A549 (cell line): ENCODE measurements at regions of chr17 and their contacts with region 1.

Region 1: GRCh38 chr17:40075201-40075941 is 12.6 kb downstream of the THRA start:
- DNase-seq: peak in 1 of 2 experiments; percentile 75
- ATAC-seq: peak; percentile 6 to 43; a peak in 3 of 6 replicates
- H3K4me3 ChIP-seq: 0 out of 3 replicates have a peak overlapping the region, but pooled peaks have one; percentile 2
- H3K27ac ChIP-seq: peak overlapping the region; percentile 95
- H3K4me1 ChIP-seq: peaks cover 59% of the 10 kb centered on the region
- CTCF ChIP-seq: peak; percentile 97
- EP300 ChIP-seq: no peak
- POLR2A ChIP-seq: no peak
- RAD21 ChIP-seq: peak; percentile 73 to 85

Region 2: DNA sequence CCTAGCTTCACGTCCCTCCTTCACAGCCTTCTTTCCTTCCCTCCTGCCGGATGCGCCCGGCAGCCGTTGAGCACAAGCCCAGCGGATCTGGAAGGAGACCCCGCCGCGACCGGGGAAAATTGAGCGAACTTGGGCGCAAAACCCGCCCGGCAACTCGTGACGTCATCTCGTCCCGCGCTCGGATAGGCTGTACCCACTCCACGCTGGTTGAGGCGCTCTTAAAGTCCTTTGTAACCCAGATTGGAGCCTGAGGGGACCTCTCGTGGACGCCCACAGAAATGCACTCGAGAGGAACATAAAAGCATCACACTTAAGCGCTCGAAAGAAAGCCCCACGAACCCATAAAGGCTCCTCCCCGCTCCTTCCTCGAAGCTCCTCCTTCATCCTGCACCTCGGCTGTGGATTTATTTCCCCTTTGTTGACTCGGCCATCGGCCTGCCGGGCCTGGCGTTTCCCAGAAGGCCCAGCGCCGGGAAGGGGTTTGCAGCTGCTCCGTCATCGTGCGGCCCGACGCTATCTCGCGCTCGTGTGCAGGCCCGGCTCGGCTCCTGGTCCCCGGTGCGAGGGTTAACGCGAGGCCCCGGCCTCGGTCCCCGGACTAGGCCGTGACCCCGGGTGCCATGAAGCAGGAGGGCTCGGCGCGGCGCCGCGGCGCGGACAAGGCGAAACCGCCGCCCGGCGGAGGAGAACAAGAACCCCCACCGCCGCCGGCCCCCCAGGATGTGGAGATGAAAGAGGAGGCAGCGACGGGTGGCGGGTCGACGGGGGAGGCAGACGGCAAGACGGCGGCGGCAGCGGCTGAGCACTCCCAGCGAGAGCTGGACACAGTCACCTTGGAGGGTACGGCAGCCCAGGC is 94.8 kb before region 1 on chr17 and contains the start of gene PSMD3:
- CTCF ChIA-PET with region 1: interaction called, 11 read pairs
- POLR2A ChIA-PET with region 1: no interaction called
- DNase-seq: peak; percentile 97 to 100
- ATAC-seq: peak; percentile 91 to 94
- H3K4me3 ChIP-seq: peak within 1 kb of the TSS; percentile 89
- H3K27ac ChIP-seq: peak within 1 kb of the TSS; percentile 93 to 95
- H3K4me1 ChIP-seq: peaks cover 20% of the 10 kb centered on the region
- CTCF ChIP-seq: peak; percentile 79
- EP300 ChIP-seq: no peak
- POLR2A ChIP-seq: peak; percentile 87
- RAD21 ChIP-seq: peak; percentile 79 to 85
- polyA plus RNA-seq, gene PSMD3: 87.7 and 113 TPM in 2 replicates

Region 3: GRCh38 chr17:40021451-40021971 is 53.9 kb before region 1 on chr17:
- CTCF ChIA-PET with region 1: interaction called, 118 read pairs
- POLR2A ChIA-PET with region 1: no interaction called
- DNase-seq: peak; percentile 56 to 80
- ATAC-seq: peak; percentile 57 to 72
- H3K4me3 ChIP-seq: no peak overlapping the region
- H3K27ac ChIP-seq: peak overlapping the region; percentile 83 to 84
- H3K4me1 ChIP-seq: peaks cover 43% of the 10 kb centered on the region
- CTCF ChIP-seq: no peak
- EP300 ChIP-seq: no peak
- POLR2A ChIP-seq: no peak
- RAD21 ChIP-seq: no peak

Region 4: DNA sequence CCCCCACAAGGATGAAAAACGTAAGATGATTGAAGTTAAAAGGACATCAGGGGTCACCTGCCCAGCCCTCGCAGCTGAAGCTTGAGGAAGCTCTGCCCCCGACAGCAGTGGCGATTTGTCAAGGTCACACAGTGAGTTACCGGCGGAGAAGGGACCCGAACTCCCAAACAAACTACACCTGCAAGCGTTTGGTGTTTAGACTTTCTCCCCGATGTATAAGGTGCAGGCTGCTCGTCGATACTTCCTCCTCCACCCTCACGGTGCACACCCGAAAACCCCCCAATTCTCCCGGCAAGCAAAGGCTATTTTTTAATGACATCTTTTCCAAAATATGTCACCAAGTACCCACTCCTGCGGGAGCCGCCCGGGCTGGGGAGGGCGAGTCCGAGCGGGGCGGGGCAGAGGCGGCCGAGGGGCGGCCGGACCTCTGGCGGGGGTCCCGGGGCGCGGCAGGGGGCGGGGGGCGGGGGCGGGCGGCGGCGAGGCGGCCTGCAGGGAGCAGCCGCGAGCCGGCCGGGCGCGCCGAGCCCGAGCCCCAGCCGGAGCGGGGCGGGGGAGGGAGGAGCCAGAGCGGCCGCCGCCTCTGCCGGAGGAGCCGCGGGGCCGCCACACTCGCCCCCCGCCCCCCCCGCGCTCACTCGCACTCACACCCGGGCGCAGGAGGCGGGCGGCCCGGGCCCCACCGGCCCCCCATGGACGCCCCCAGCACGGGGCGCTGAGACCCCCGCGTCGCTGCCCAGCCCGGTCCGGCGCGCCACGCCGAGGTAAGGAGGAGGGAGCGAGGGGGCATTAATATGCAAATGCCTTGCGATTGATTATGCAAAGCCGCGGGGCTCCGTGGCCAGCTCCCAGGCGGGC is 12.8 kb before region 1 on chr17 and contains the start of gene THRA:
- CTCF ChIA-PET with region 1: interaction called, 919 read pairs
- POLR2A ChIA-PET with region 1: interaction called, 3 read pairs
- DNase-seq: peak in 1 of 2 experiments; percentile 68
- ATAC-seq: peak; percentile 65 to 70
- H3K4me3 ChIP-seq: peak within 1 kb of the TSS; percentile 98
- H3K27ac ChIP-seq: peak within 1 kb of the TSS; percentile 92 to 98
- H3K4me1 ChIP-seq: peaks cover 33% of the 10 kb centered on the region
- CTCF ChIP-seq: peak; percentile 86
- EP300 ChIP-seq: no peak
- POLR2A ChIP-seq: no peak
- RAD21 ChIP-seq: no peak; a peak in 3 of 5 replicates
- polyA plus RNA-seq, gene THRA: 20.1 and 27.4 TPM in 2 replicates

Region 5: GRCh38 chr17:40121181-40122135 is 46.1 kb after region 1 on chr17 and contains the start of gene MSL1:
- CTCF ChIA-PET with region 1: interaction called, 228 read pairs
- POLR2A ChIA-PET with region 1: no interaction called
- DNase-seq: peak; percentile 83 to 91
- ATAC-seq: peak; percentile 75 to 76
- H3K4me3 ChIP-seq: peak within 1 kb of the TSS; percentile 67
- H3K27ac ChIP-seq: peak within 1 kb of the TSS; percentile 94 to 100
- H3K4me1 ChIP-seq: peaks cover 24% of the 10 kb centered on the region
- CTCF ChIP-seq: no peak
- EP300 ChIP-seq: no peak
- POLR2A ChIP-seq: peak; percentile 46
- RAD21 ChIP-seq: no peak; a peak in 1 of 5 replicates
- polyA plus RNA-seq, gene MSL1: 87.8 and 95.1 TPM in 2 replicates